Calu3 (cell line): ENCODE measurements at regions of chrX and their contacts with region 1.

Region 1: GRCh38 chrX:3962511-3963311 is 249.3 kb upstream of the PRKX start:
- DNase-seq: peak; percentile 65
- H3K4me3 Mint-ChIP-seq: peak overlapping the region; percentile 59
- H3K27ac Mint-ChIP-seq: peak overlapping the region; percentile 58
- H3K4me1 Mint-ChIP-seq: peaks cover 24% of the 10 kb centered on the region
- H3K27me3 Mint-ChIP-seq: no peaks in the 10 kb centered on the region
- CTCF ChIP-seq: peak; percentile 37

Region 2: GRCh38 chrX:3435057-3435456 is 527.7 kb before region 1 on chrX:
- CTCF ChIA-PET with region 1: no interaction called
- intact Hi-C with region 1: no loop called
- DNase-seq: no peak
- H3K4me3 Mint-ChIP-seq: no peak overlapping the region
- H3K27ac Mint-ChIP-seq: no peak overlapping the region
- H3K4me1 Mint-ChIP-seq: no peaks in the 10 kb centered on the region
- H3K27me3 Mint-ChIP-seq: peaks cover 7% of the 10 kb centered on the region
- CTCF ChIP-seq: no peak

Region 3: GRCh38 chrX:3940000-3940610 is 22.6 kb before region 1 on chrX:
- CTCF ChIA-PET with region 1: interaction called, 19 read pairs
- intact Hi-C with region 1: no loop called
- DNase-seq: peak; percentile 57
- H3K4me3 Mint-ChIP-seq: peak overlapping the region; percentile 6
- H3K27ac Mint-ChIP-seq: peak overlapping the region; percentile 93
- H3K4me1 Mint-ChIP-seq: no peaks in the 10 kb centered on the region
- H3K27me3 Mint-ChIP-seq: no peaks in the 10 kb centered on the region
- CTCF ChIP-seq: no peak

Region 4: GRCh38 chrX:4263030-4263803 is 300.5 kb after region 1 on chrX:
- CTCF ChIA-PET with region 1: no interaction called
- intact Hi-C with region 1: loop called (anchors 5 kb)
- DNase-seq: peak; percentile 15
- H3K4me3 Mint-ChIP-seq: no peak overlapping the region
- H3K27ac Mint-ChIP-seq: no peak overlapping the region
- H3K4me1 Mint-ChIP-seq: peaks cover 6% of the 10 kb centered on the region
- H3K27me3 Mint-ChIP-seq: no peaks in the 10 kb centered on the region
- CTCF ChIP-seq: no peak

Region 5: DNA sequence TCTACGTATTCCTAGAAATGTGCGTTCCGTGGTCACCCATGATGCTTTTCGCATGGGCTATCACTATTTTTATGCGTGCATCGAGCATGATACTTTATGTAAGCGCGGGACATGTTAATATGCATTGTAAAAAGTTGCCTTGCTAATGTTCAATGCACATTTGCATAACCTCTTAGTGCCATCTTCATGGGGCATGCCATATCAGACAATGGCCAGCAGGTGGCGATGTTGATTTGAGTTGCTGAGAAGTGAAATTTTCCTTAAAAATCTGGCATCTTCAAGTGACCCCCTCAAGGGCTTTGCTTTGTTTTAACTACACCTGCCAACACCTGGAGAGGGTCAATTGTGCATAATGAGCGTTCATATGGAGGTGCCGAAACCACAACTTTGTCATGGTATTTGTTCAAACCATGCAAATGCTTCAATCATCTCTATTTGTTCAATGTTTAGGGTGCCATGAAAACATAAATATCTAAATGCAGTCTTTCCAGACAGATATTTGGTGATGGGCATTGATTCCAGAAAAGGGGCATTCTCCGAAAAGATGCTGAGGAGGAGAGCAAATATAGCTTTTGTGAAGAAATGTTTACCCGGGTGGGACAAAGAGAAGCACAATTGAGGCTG is 584.6 kb after region 1 on chrX:
- CTCF ChIA-PET with region 1: no interaction called
- intact Hi-C with region 1: loop called (anchors 5 kb)
- DNase-seq: peak; percentile 41
- H3K4me3 Mint-ChIP-seq: no peak overlapping the region
- H3K27ac Mint-ChIP-seq: no peak overlapping the region
- H3K4me1 Mint-ChIP-seq: peaks cover 6% of the 10 kb centered on the region
- H3K27me3 Mint-ChIP-seq: no peaks in the 10 kb centered on the region
- CTCF ChIP-seq: peak; percentile 82